ENCODE measurements at regions of chr11 and their contacts with region 1.

Region 1: DNA sequence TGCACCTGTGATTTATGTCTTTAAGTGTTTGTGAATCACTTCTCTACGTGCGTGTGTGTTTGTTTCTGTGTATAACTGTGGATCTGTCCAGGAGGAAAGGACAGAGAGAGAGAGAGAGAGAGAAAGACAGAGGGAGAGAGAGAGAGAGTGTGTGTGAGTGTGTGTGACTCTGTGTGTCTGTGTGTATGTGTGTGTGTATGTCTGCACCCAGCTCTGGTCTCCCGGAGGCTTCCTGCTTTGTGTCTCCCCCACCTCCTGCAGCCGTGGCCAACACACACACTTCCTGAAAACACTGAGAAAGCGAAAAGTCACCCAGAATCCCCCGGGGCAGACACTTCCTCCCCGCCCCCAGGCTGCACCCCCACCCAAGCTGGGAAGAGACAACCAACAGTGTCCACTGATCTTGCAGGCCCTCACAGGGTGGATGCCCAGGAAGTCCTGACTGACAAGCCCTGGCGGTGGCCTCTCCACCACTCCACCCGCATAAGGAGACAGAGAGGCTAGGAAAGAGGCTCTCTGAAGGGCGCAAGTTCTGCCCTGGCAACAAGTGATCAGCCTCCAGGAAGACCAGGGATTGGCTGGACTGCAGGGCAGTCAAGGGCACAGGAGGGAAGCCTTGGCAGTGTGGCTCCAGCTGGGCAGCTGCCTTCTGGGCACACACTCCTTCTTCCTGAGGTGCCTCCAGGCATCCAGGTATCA is 30.0 kb downstream of the ARAP1 start:
- DNase-seq: peak; percentile 80
- H3K4me3 Mint-ChIP-seq: peak overlapping the region; percentile 94
- H3K27ac Mint-ChIP-seq: peak overlapping the region; percentile 96
- H3K4me1 Mint-ChIP-seq: peaks cover 70% of the 10 kb centered on the region
- H3K27me3 Mint-ChIP-seq: no peaks in the 10 kb centered on the region

Region 2: DNA sequence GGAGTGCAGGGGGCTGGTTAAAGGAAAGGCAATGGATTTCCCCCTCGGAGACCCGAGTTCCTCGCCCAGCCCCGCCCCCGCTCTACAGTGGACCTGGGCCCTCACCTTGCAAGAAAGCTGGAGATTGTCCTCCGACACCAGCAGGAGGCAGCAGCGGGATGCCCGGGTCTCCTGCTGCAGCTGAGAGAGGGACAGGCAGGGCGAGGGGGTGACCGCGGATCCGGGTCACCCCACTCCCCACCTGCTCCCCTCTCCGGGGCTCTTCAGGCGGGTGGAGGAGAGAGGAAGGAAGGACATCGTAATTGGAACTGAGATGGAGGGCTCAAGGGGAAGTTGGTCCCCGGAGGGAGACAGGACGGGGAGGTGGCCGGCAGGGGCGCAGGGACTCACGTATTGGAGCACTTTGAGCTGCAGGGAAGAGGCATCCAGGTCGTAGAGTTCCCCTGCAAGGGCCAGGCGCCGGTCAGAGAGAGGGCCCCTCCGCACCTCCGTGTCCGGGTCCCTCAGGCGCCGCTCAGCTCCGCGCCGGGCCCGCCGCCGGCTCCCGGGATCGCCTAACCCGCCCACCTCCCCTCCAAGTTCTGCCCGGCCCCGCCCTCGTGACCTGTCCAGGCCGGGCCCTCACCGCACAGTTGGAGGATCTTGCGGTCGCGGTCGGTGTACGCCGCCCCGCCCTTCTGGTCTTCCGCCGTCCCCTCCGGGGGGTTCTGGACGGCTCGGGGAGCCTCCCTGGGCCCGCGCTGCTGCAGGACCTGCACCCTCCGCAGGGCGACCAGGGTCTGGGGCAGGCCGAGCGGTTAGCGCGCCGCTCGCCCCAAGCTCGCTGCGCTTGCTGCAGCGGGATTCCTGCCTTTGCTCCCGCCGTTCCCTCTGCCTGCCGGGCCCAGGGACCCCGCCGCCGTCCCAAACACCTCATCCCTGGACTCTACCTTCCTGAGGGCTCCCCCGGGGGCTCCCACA is 132.1 kb before region 1 on chr11:
- intact Hi-C with region 1: no loop called
- DNase-seq: peak; percentile 34
- H3K4me3 Mint-ChIP-seq: peak overlapping the region; percentile 32
- H3K27ac Mint-ChIP-seq: no peak overlapping the region
- H3K4me1 Mint-ChIP-seq: peaks cover 36% of the 10 kb centered on the region
- H3K27me3 Mint-ChIP-seq: peaks cover 50% of the 10 kb centered on the region

Region 3: GRCh38 chr11:72668611-72669347 is 53.4 kb before region 1 on chr11:
- intact Hi-C with region 1: loop called (anchors 1 kb)
- DNase-seq: peak; percentile 43
- H3K4me3 Mint-ChIP-seq: peak overlapping the region; percentile 52
- H3K27ac Mint-ChIP-seq: peak overlapping the region; percentile 71
- H3K4me1 Mint-ChIP-seq: peaks cover 15% of the 10 kb centered on the region
- H3K27me3 Mint-ChIP-seq: peaks cover 33% of the 10 kb centered on the region

Region 4: GRCh38 chr11:72736452-72737069 is 14.4 kb after region 1 on chr11:
- intact Hi-C with region 1: loop called (anchors 1 kb)
- DNase-seq: peak; percentile 64
- H3K4me3 Mint-ChIP-seq: peak overlapping the region; percentile 67
- H3K27ac Mint-ChIP-seq: peak overlapping the region; percentile 99
- H3K4me1 Mint-ChIP-seq: peaks cover 47% of the 10 kb centered on the region
- H3K27me3 Mint-ChIP-seq: no peaks in the 10 kb centered on the region

Region 5: DNA sequence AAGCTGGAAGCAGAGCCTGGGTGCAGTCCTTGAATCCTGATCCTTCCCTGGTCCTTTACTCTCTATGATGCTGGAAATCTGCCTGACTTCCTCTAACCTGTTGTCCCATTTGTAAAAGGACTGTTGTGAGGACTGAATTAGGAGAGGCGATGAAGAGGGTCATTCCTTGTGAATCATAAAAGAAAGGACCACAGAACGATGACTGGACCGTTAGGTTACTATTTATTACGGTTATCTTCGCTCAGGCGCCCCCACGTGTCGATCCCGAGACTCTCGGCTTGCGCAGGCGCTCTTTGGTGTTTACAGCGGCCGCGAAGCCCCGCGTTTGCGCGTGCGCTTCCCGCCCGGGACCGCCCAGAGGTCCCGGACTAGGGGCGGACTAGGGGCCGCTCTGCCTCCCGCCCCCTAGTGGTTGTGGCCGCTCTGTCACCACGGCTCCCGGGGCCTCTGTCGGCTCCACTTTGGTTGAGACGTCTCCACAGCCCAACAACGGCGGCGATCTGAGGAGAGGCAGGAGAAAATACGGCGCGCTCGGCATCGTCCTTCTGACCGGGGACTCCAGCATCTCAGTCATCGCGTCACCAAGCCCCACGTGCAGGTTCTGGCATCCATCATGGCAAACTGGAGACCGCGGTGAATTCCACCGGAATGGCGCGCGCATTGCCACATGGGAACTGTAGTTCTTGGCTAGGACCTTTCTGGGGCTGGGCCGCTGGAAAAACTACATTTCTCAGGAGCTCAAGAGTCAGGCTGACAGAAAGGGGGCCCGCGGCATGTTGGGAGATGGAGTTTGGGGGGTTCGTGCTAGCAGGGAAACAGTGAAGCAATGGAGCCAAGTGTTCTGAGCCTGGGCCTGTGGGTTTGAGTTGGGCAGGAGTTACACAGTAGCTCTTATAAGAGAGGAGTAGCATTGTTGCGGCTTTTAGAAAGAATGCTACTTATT is 71.5 kb after region 1 on chr11 and contains the start of gene STARD10:
- intact Hi-C with region 1: loop called (anchors 1 kb)
- DNase-seq: peak; percentile 93
- H3K4me3 Mint-ChIP-seq: peak within 1 kb of the TSS; percentile 93
- H3K27ac Mint-ChIP-seq: peak within 1 kb of the TSS; percentile 99
- H3K4me1 Mint-ChIP-seq: peaks cover 35% of the 10 kb centered on the region
- H3K27me3 Mint-ChIP-seq: no peaks in the 10 kb centered on the region
- total RNA-seq, gene STARD10: 19.8 and 23.9 TPM in 2 replicates

Region 6: DNA sequence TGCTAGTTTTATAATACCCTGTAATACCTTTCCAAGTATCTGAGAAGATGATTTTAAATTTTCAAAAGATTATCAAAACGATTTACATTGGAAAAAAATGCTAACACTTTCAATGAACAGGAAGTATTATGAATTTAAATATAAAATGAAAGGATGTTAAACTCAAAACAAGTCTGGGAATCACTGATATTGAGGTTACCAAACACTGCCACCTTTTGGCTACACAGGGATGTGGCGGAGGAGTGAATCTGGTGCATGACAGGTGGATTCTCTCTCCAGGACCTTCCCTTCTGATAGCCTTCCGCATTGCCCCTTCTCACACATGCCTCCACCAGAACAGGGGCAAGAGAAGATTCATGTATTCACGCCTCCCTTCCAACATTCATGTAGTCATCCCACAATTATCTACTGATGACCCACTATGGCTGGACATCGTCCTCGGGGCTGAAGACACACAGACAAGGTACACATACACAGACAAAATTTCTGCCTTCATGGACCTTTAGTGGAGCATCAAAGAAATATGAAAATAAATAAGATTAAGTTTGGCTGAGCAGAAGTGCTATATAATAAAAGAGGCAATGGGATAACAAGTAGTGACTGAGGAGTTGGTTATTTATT is 126.8 kb after region 1 on chr11:
- intact Hi-C with region 1: loop called (anchors 1 kb)
- DNase-seq: peak; percentile 26
- H3K4me3 Mint-ChIP-seq: no peak overlapping the region
- H3K27ac Mint-ChIP-seq: no peak overlapping the region
- H3K4me1 Mint-ChIP-seq: peaks cover 13% of the 10 kb centered on the region
- H3K27me3 Mint-ChIP-seq: no peaks in the 10 kb centered on the region

Region 7: DNA sequence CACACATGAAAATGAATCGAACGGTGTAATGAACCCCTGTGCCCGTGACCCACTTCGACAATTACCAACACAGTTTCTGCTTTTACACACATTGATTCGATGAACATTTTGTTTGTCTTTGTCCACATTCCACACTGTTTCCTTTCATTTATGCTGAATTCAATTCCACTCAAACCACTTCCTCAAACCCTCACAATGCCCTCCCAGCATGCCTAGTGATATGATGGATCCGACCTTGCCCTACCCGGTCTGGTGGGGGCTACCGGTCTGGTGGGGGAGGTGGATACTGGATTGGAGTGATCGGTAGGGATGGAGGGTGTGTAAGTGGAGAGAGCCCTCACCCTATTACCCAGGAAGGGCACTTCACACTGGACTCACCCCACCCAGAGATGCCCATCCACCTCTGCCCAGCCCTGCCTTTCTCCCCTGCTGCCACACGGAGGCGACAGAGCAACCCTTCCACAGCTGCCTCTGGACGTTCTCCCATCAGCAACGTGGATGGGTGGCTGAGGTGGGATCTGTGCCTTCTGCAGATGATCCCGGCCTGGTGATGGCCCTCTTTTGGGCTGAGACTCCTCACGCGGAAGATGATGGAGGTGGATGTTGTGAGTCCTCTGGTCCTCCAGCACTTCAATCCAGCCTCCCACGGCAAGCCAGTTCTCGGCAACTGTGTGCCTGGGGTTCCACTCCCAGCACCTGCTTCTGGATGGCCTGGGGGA is 462.9 kb after region 1 on chr11:
- intact Hi-C with region 1: loop called (anchors 2 kb)
- DNase-seq: peak; percentile 40
- H3K4me3 Mint-ChIP-seq: no peak overlapping the region
- H3K27ac Mint-ChIP-seq: no peak overlapping the region
- H3K4me1 Mint-ChIP-seq: peaks cover 13% of the 10 kb centered on the region
- H3K27me3 Mint-ChIP-seq: peaks cover 21% of the 10 kb centered on the region

Region 8: GRCh38 chr11:73376160-73376802 is 654.1 kb after region 1 on chr11 and contains the start of gene RELT:
- intact Hi-C with region 1: loop called (anchors 2 kb)
- DNase-seq: peak; percentile 94
- H3K4me3 Mint-ChIP-seq: peak within 1 kb of the TSS; percentile 91
- H3K27ac Mint-ChIP-seq: peak within 1 kb of the TSS; percentile 90
- H3K4me1 Mint-ChIP-seq: peaks cover 28% of the 10 kb centered on the region
- H3K27me3 Mint-ChIP-seq: no peaks in the 10 kb centered on the region
- total RNA-seq, gene RELT: 34.6 and 37.6 TPM in 2 replicates